ENCODE measurements at regions of chr10 and their contacts with region 1.

Region 1: GRCh38 chr10:29670761-29671160 is 36.0 kb upstream of the SVIL start:
- DNase-seq: no peak
- H3K4me3 ChIP-seq: no peak overlapping the region
- CTCF ChIP-seq: no peak
- POLR2A ChIP-seq: no peak

Region 2: GRCh38 chr10:28903065-28903464 is 767.7 kb before region 1 on chr10:
- intact Hi-C with region 1: loop called (anchors 5 kb)
- DNase-seq: no peak
- H3K4me3 ChIP-seq: no peak overlapping the region
- CTCF ChIP-seq: no peak
- POLR2A ChIP-seq: no peak

Region 3: DNA sequence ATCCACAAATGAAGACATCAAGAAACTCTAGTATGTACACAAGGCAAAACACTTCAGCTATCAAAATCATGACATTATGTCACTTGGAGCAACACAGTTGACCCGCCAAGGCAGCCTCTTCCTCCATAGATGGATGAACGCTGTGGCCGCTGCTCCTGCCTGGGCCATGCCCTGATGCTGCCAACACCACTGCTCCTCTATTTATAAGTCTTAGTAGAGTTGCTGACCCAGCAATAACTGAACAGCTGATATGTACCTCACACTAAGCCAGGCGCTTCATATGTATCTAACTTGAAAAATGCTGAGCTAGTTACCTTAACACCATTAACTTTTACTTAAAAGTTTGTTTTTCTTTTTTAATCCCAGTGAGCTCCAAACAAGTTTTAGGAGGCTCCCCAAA is 250.0 kb before region 1 on chr10:
- intact Hi-C with region 1: no loop called
- DNase-seq: no peak
- H3K4me3 ChIP-seq: no peak overlapping the region
- CTCF ChIP-seq: no peak
- POLR2A ChIP-seq: no peak

Region 4: GRCh38 chr10:30170824-30171223 is 500.1 kb after region 1 on chr10:
- intact Hi-C with region 1: no loop called
- DNase-seq: no peak
- H3K4me3 ChIP-seq: no peak overlapping the region
- CTCF ChIP-seq: no peak
- POLR2A ChIP-seq: no peak

Measured in lower leg skin (tissue), 4 donors.